Heart left ventricle (tissue), 16 donors: ENCODE measurements at regions of chr13 and their contacts with region 1.

Region 1: GRCh38 chr13:39684531-39685137 is 29.2 kb downstream of the COG6 start:
- DNase-seq: no peak
- ATAC-seq: no peak
- H3K4me3 ChIP-seq: no peak overlapping the region
- H3K27ac ChIP-seq: no peak overlapping the region
- H3K4me1 ChIP-seq: peaks cover 0 to 4% (median 0%) of the 10 kb centered on the region in 12 donors
- H3K27me3 ChIP-seq: no peaks in the 10 kb centered on the region
- CTCF ChIP-seq: peak; percentile 36 to 60 (median 52)
- POLR2A ChIP-seq: no peak

Region 2: DNA sequence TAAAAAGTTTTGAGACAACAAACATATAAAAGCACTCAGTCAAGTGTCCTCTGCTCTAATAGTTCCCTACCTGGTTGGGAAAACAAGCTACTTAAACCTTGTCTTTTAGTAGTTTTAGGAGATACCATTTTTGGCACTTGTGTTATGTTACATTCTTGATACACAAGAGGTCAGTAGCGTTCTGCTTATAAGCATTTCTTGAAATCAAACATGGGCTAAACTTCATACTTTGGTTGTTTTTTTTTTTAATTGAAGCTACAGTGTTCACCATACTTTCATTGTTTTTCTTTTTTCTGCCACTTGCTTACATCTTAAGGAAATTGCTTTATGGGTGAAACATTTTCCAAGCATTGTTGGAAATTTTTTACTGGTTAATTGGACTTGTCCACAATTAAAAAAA is 633.5 kb before region 1 on chr13:
- intact Hi-C with region 1: loop called in 8 of 10 experiments (anchors 5 to 10 kb)
- DNase-seq: no peak
- ATAC-seq: peak in 1 of 4 donors; percentile 41
- H3K4me3 ChIP-seq: no peak overlapping the region
- H3K27ac ChIP-seq: no peak overlapping the region
- H3K4me1 ChIP-seq: no peaks in the 10 kb centered on the region
- H3K27me3 ChIP-seq: no peaks in the 10 kb centered on the region
- CTCF ChIP-seq: peak; percentile 18 to 73 (median 55)
- POLR2A ChIP-seq: no peak

Region 3: GRCh38 chr13:39942552-39943273 is 258.1 kb after region 1 on chr13:
- intact Hi-C with region 1: loop called in 1 of 10 experiments (anchors 10 kb)
- DNase-seq: peak in 4 of 5 donors; percentile 44 to 68 (median 60)
- ATAC-seq: peak; percentile 61 to 97 (median 88)
- H3K4me3 ChIP-seq: no peak overlapping the region
- H3K27ac ChIP-seq: no peak overlapping the region
- H3K4me1 ChIP-seq: peaks cover 0 to 6% (median 0%) of the 10 kb centered on the region in 12 donors
- H3K27me3 ChIP-seq: no peaks in the 10 kb centered on the region
- CTCF ChIP-seq: peak; percentile 84 to 99 (median 90)
- POLR2A ChIP-seq: no peak

Region 4: GRCh38 chr13:40770934-40771618 is 1086.4 kb after region 1 on chr13 and contains the start of gene MRPS31:
- intact Hi-C with region 1: loop called in 7 of 10 experiments (anchors 2 to 10 kb)
- DNase-seq: peak; percentile 95 to 98 (median 97)
- ATAC-seq: peak; percentile 99 to 100 (median 100)
- H3K4me3 ChIP-seq: peak within 1 kb of the TSS; percentile 58 to 90 (median 75)
- H3K27ac ChIP-seq: peak within 1 kb of the TSS; percentile 63 to 92 (median 84)
- H3K4me1 ChIP-seq: peaks cover 0 to 25% (median 13%) of the 10 kb centered on the region in 12 donors
- H3K27me3 ChIP-seq: no peaks in the 10 kb centered on the region
- CTCF ChIP-seq: no peak
- POLR2A ChIP-seq: peak in 1 of 2 donors; percentile 63
- total RNA-seq, gene MRPS31: 21.9 to 33.1 (median 27.1) TPM

Region 5: GRCh38 chr13:40777166-40777808 is 1092.7 kb after region 1 on chr13:
- intact Hi-C with region 1: loop called in 7 of 10 experiments (anchors 2 to 10 kb)
- DNase-seq: no peak
- ATAC-seq: peak; percentile 72 to 87 (median 80)
- H3K4me3 ChIP-seq: peak overlapping the region in 8 of 12 donors; percentile 21 to 54 (median 34)
- H3K27ac ChIP-seq: peak overlapping the region in 1 of 12 donors; percentile 79
- H3K4me1 ChIP-seq: peaks cover 0 to 19% (median 2%) of the 10 kb centered on the region in 12 donors
- H3K27me3 ChIP-seq: no peaks in the 10 kb centered on the region
- CTCF ChIP-seq: peak; percentile 36 to 81 (median 68)
- POLR2A ChIP-seq: no peak